GM12878 (cell line): ENCODE measurements at regions of chr2 and their contacts with region 1.

Region 1: DNA sequence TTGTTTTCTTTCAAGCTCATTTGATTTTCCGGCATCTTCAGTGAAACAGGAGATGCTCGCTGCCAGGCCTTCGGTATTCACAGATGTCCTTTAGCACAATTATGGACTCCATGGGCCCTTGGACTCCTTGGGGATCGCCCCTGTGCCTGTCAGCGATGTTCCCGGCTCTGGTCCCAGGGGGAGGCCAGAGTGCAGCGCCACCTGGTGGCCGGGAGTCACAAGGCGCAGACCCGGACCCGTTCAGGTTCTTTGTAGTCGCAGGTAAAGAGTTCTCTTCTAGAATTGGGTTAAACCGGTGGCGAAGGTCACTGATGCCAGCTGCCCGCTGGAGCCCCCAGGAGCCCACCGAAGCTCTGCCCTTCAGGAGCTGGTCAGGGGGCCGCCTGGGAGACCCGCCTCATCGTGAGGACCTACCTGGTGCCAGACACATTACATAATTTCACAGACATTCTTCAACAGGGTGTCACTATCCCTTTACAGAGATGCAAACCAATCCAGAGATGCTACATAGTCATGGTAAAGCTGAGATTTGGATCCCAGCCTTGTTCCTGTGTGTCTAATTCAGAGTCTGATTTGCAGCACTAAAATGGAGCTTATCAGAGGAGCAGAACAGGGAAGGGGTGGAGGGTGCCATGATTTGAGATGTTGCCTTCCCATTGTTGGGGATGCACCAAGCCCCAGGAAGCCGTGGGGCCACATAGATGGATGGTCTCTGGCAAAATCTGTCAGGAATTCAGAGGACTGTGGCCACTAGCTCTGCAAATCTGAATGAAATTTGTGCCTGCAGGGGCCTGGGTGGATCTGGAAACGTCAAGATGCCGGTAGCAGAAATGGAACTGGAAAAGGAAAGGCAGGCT is 6.0 kb upstream of the INPP5D start:
- DNase-seq: no peak
- ATAC-seq: peak; percentile 98
- H3K4me3 ChIP-seq: no peak overlapping the region
- H3K27ac ChIP-seq: no peak overlapping the region
- H3K4me1 ChIP-seq: peaks cover 2% of the 10 kb centered on the region
- H3K27me3 ChIP-seq: no peaks in the 10 kb centered on the region
- CTCF ChIP-seq: peak; percentile 87 to 97 (median 93)
- EP300 ChIP-seq: no peak
- POLR2A ChIP-seq: no peak
- RAD21 ChIP-seq: peak; percentile 74

Region 2: DNA sequence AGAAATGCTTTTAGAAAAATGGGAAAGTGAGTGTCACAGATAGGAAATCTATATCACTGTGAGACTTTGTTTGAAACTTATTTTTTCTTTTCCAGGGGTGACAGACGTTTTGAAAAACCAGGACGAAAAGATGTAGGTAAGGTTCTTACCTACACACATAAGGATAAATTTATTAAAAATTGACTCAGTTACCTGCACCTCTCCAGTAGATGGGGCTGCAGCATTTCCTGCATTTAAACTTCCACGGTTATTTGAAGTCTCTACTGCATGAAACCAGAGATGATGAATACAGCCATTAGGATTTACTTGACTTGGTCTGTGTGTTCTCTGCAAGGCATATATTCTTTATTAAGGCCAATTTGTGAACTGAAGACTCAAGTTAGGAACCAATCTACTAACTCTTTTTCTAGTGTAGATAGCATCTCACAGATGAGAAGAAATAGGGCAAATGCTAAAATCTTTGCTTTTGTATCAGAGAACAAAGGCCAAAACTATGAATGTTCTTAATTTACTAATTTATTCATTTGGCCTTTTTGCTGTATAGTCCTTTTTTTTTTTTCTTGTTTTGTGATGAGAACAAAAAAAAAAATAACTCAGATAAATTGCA is 292.8 kb before region 1 on chr2:
- CTCF ChIA-PET with region 1: interaction called, 13 read pairs
- POLR2A ChIA-PET with region 1: no interaction called
- RAD21 ChIA-PET with region 1: interaction called, 4 read pairs
- SMC1A ChIA-PET with region 1: no interaction called
- in situ Hi-C with region 1: no loop called
- intact Hi-C with region 1: no loop called
- DNase-seq: no peak
- ATAC-seq: peak; percentile 68
- H3K4me3 ChIP-seq: no peak overlapping the region
- H3K27ac ChIP-seq: no peak overlapping the region
- H3K4me1 ChIP-seq: peaks cover under 1% of the 10 kb centered on the region; the same call in 1 of the 2 replicates
- H3K27me3 ChIP-seq: no peaks in the 10 kb centered on the region
- CTCF ChIP-seq: peak; percentile 51 to 73 (median 56); a peak in 5 of 6 replicates
- EP300 ChIP-seq: no peak
- POLR2A ChIP-seq: no peak
- RAD21 ChIP-seq: peak; percentile 65

Region 3: GRCh38 chr2:232795920-232796319 is 258.2 kb before region 1 on chr2:
- CTCF ChIA-PET with region 1: no interaction called
- POLR2A ChIA-PET with region 1: no interaction called
- RAD21 ChIA-PET with region 1: no interaction called
- SMC1A ChIA-PET with region 1: no interaction called
- in situ Hi-C with region 1: no loop called
- intact Hi-C with region 1: no loop called
- DNase-seq: no peak
- ATAC-seq: no peak
- H3K4me3 ChIP-seq: no peak overlapping the region
- H3K27ac ChIP-seq: no peak overlapping the region
- H3K4me1 ChIP-seq: no peaks in the 10 kb centered on the region
- H3K27me3 ChIP-seq: no peaks in the 10 kb centered on the region
- CTCF ChIP-seq: no peak
- EP300 ChIP-seq: no peak
- POLR2A ChIP-seq: no peak
- RAD21 ChIP-seq: no peak

Region 4: DNA sequence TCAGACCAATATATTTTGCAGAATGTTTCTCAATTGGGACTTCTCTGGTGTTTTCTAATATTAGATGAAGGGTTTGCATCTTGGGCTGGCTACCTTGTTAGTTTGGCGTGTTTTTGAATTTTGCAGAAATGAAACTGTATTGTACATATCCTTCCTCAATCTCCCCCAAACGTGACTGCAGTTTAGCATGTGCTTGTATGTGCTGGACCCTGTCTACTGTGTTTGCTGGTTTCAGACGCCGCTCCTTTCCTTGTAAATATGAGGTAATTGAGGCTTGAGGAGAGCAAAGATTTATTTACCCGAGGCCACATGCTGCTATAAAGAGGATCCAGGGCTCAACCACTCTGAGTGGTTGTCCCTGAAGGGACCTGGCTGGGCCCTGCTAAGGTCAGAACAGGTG is 98.3 kb before region 1 on chr2:
- CTCF ChIA-PET with region 1: interaction called, 18 read pairs
- POLR2A ChIA-PET with region 1: no interaction called
- RAD21 ChIA-PET with region 1: interaction called, 4 read pairs
- SMC1A ChIA-PET with region 1: interaction called, 5 read pairs
- in situ Hi-C with region 1: no loop called
- intact Hi-C with region 1: no loop called
- DNase-seq: peak; percentile 13
- ATAC-seq: peak; percentile 77
- H3K4me3 ChIP-seq: no peak overlapping the region
- H3K27ac ChIP-seq: no peak overlapping the region; the same call in 1 of the 2 replicates
- H3K4me1 ChIP-seq: peaks cover 19% of the 10 kb centered on the region
- H3K27me3 ChIP-seq: no peaks in the 10 kb centered on the region
- CTCF ChIP-seq: no peak
- EP300 ChIP-seq: no peak
- POLR2A ChIP-seq: no peak
- RAD21 ChIP-seq: no peak

Region 5: DNA sequence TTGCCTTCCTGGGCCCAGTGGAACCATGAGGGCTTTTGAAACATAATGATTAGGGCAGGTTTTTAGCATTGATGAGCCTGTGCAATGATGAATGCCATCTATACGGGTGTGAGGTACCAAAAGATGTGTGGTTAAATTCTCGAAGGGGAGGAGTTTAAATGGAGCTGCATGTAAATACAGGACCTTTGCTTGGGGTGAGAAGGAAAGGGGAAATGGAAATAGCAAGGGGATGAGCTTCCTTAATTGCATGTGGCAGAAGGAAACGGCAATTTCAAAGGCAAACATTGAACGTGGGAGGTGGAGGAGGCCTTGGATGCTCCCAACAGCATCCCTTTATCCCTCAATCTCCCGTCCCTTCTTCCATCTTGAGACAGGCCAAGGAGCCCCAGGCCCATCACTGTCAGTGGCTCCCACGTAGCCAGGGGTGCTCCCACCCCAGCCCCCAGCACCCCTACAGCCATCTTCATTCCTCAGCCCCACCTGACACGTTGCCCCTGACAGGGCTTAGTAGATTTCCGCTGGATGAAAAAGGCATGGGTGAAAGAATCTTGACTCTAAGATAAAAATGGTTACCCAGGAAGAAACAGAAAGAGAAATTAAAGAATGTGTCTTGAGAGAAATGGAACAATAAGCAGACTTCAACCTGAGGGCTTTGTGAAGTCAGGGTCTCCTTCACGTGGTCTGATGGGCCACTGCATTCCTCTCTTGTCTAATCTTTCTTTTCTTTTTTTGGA is 38.4 kb after region 1 on chr2:
- CTCF ChIA-PET with region 1: interaction called, 19 read pairs
- POLR2A ChIA-PET with region 1: no interaction called
- RAD21 ChIA-PET with region 1: interaction called, 361 read pairs
- SMC1A ChIA-PET with region 1: interaction called, 351 read pairs
- in situ Hi-C with region 1: no loop called
- intact Hi-C with region 1: no loop called
- DNase-seq: no peak
- ATAC-seq: peak; percentile 76
- H3K4me3 ChIP-seq: peak overlapping the region; percentile 27; the same call in 1 of the 2 replicates
- H3K27ac ChIP-seq: peak overlapping the region; percentile 83
- H3K4me1 ChIP-seq: peaks cover 58% of the 10 kb centered on the region
- H3K27me3 ChIP-seq: no peaks in the 10 kb centered on the region
- CTCF ChIP-seq: no peak
- EP300 ChIP-seq: no peak
- POLR2A ChIP-seq: no peak
- RAD21 ChIP-seq: no peak

Region 6: GRCh38 chr2:233223059-233223894 is 169.1 kb after region 1 on chr2:
- CTCF ChIA-PET with region 1: interaction called, 12 read pairs
- POLR2A ChIA-PET with region 1: no interaction called
- RAD21 ChIA-PET with region 1: interaction called, 3 read pairs
- SMC1A ChIA-PET with region 1: interaction called, 13 read pairs
- in situ Hi-C with region 1: no loop called
- intact Hi-C with region 1: no loop called
- DNase-seq: peak; percentile 75
- ATAC-seq: peak; percentile 95
- H3K4me3 ChIP-seq: no peak overlapping the region
- H3K27ac ChIP-seq: peak overlapping the region; percentile 66
- H3K4me1 ChIP-seq: peaks cover 28% of the 10 kb centered on the region
- H3K27me3 ChIP-seq: no peaks in the 10 kb centered on the region
- CTCF ChIP-seq: no peak
- EP300 ChIP-seq: peak; percentile 62 to 87; a peak in 3 of 4 replicates
- POLR2A ChIP-seq: no peak
- RAD21 ChIP-seq: no peak